Activated CD4-positive, alpha-beta T cell treated with anti-CD3 and anti-CD28 coated beads, Interleukin-2, amount 10 ng/mL, durations not matched to agents 24 days and 14 days (primary cell): ENCODE measurements at regions of chr1 and their contacts with region 1.

Region 1: GRCh38 chr1:115138968-115139367 is 49.7 kb upstream of the TSPAN2 start:
- DNase-seq: peak; percentile 88
- H3K4me3 Mint-ChIP-seq: peak overlapping the region; percentile 22
- H3K27ac Mint-ChIP-seq: no peak overlapping the region
- H3K4me1 Mint-ChIP-seq: peaks cover 3% of the 10 kb centered on the region
- H3K27me3 Mint-ChIP-seq: peaks cover 21% of the 10 kb centered on the region

Region 2: DNA sequence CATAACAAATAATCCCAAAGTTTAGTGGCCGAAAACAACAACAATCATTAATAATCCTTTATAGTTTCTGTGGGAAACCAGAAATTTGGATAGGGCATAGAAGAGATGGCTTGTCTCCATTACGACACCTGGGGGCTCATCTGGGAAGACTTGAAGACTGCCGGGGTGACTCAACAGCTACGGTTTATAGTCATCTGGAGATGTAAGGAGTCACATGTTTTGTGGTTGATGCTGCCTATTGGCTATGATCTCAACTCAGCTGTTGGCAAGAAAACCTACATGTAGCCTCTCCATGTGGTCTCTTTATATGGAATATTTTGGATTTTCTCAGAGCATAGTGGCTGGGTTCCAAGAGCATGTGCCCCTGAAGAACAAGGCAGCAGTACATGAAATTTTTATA is 20.4 kb before region 1 on chr1:
- intact Hi-C with region 1: no loop called
- DNase-seq: no peak
- H3K4me3 Mint-ChIP-seq: no peak overlapping the region
- H3K27ac Mint-ChIP-seq: no peak overlapping the region
- H3K4me1 Mint-ChIP-seq: no peaks in the 10 kb centered on the region
- H3K27me3 Mint-ChIP-seq: peaks cover 7% of the 10 kb centered on the region

Region 3: GRCh38 chr1:115456441-115456961 is 317.5 kb after region 1 on chr1:
- intact Hi-C with region 1: no loop called
- DNase-seq: no peak
- H3K4me3 Mint-ChIP-seq: no peak overlapping the region
- H3K27ac Mint-ChIP-seq: no peak overlapping the region
- H3K4me1 Mint-ChIP-seq: no peaks in the 10 kb centered on the region
- H3K27me3 Mint-ChIP-seq: no peaks in the 10 kb centered on the region

Region 4: GRCh38 chr1:115469703-115470476 is 330.9 kb after region 1 on chr1:
- intact Hi-C with region 1: loop called (anchors 1 kb)
- DNase-seq: peak; percentile 74
- H3K4me3 Mint-ChIP-seq: no peak overlapping the region
- H3K27ac Mint-ChIP-seq: no peak overlapping the region
- H3K4me1 Mint-ChIP-seq: no peaks in the 10 kb centered on the region
- H3K27me3 Mint-ChIP-seq: no peaks in the 10 kb centered on the region

Region 5: GRCh38 chr1:115595279-115596079 is 456.5 kb after region 1 on chr1:
- intact Hi-C with region 1: loop called (anchors 1 kb)
- DNase-seq: peak; percentile 90
- H3K4me3 Mint-ChIP-seq: no peak overlapping the region
- H3K27ac Mint-ChIP-seq: no peak overlapping the region
- H3K4me1 Mint-ChIP-seq: no peaks in the 10 kb centered on the region
- H3K27me3 Mint-ChIP-seq: peaks cover 4% of the 10 kb centered on the region